Activated T-helper 2 cell treated with anti-CD3 and anti-CD28 coated beads, Interferon-gamma antibody, Interleukin-2, Interleukin-4, amounts not matched to agents 10 μg/mL and 5 μg/mL and 100 μg/mL, durations not matched to agents 14 hours and 24 hours and 36 hours (primary cell): ENCODE measurements at regions of chr6 and their contacts with region 1.

Region 1: DNA sequence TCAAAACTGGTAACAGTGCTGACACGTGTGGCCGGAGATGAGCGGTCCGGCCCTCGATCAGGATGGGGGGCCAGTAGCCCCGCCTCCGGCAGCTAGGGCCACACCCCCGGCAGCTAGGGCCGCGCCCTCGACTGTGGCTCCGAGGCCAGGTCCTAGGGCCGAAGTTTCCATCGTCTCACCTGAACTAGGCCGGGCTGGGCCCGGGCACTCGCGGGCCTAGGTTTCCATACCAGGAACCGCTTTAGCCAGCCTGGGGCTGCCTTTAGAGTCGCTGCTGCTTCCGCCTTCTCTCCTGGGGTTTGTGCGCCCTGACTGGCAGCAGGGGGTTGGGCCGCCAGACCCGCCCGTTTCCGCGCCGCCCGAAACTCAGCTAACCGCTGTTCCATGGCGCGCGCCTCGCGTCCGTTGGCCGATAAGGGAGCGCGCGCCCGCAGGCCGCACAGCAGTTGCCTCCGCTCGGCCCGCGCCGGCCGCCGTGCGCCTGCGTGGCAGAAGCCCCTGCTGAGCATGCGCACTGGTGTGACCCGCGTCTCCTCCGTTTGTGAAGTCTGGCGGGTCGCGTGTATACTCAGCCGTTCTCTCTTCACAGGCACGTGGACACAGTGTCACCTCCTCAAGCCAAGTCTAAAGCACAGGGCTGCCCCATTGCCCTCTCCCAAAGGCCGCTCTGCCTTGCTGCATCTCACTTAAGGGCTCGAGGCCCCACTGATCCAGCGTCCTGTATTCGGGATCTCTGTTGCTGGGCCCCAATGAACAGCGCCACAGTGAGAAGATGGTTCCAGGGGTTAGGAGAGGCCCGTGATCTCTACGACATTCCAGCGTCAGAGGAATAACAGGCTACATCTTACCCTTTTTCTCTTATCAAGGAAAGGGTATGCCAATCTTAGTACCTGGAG is at the start of gene SAYSD1:
- DNase-seq: peak; percentile 93
- H3K4me3 Mint-ChIP-seq: peak within 1 kb of the TSS; percentile 93
- H3K27ac Mint-ChIP-seq: peak within 1 kb of the TSS; percentile 99
- H3K4me1 Mint-ChIP-seq: peaks cover 57% of the 10 kb centered on the region
- H3K27me3 Mint-ChIP-seq: no peaks in the 10 kb centered on the region
- total RNA-seq, gene SAYSD1: 16.9 and 17.1 TPM in 2 replicates

Region 2: GRCh38 chr6:37516076-37516919 is 1598.7 kb before region 1 on chr6:
- intact Hi-C with region 1: loop called (anchors 10 kb)
- DNase-seq: peak; percentile 79
- H3K4me3 Mint-ChIP-seq: peak overlapping the region; percentile 69
- H3K27ac Mint-ChIP-seq: peak overlapping the region; percentile 86
- H3K4me1 Mint-ChIP-seq: peaks cover 52% of the 10 kb centered on the region
- H3K27me3 Mint-ChIP-seq: no peaks in the 10 kb centered on the region

Region 3: DNA sequence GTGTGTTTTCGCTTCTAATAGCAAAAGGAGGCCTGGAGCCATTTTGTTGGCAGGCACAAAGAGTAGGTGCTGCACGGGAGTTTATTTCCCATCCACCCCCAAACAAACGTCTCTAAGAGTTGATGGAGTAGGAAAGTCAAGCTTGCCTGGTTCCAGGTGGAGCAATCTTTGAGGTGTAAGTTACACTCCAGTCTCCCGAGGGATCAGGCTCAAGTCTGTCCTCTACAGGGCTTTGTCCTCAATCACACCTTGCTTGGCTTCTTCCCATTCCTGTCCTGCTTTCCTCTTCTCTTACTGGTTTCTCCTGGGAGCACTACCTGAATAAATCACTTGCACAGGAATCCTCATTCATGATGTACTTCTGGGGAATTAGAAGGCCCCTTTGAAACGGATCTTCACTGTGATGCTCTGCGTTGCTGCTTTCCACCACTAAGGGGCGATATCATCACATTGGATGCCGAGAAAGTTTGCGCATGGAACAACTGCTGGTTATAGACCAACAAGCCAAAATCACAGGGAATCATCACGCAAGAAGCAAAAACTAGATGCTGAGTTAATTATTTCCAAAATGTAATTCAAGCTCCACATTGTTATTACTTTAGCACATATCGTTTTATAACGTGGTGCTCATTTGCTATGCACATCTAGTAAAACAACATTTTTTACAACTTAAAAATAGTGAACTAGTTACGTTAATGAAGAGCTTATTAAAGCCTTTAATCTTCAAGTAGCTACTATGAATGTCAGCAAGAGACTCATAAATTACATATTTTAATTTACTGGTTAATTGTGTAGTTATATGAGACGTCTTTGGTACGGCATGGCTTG is 243.0 kb before region 1 on chr6:
- intact Hi-C with region 1: loop called (anchors 10 kb)
- DNase-seq: peak; percentile 34
- H3K4me3 Mint-ChIP-seq: no peak overlapping the region
- H3K27ac Mint-ChIP-seq: no peak overlapping the region
- H3K4me1 Mint-ChIP-seq: peaks cover 19% of the 10 kb centered on the region
- H3K27me3 Mint-ChIP-seq: peaks cover 18% of the 10 kb centered on the region

Region 4: DNA sequence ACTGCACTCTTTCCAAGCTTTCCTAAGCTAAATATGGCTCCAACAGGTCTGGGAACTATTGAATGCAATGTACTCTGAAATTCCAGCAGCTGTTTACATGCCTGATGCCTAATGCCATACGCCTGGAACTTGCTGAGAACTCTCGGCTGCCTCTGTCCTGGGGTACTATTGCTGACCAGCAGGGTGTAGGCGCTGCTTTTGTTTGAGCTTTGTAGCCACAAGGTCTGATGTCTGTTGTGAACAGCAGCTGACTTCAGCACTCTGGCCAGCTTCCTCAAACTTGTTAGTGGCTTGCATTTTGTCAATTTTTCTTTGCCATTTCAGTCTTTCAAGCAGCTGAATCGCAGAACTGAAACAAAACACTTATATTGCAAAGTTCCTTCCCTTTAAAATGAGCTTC is 26.6 kb before region 1 on chr6:
- intact Hi-C with region 1: loop called (anchors 1 kb)
- DNase-seq: no peak
- H3K4me3 Mint-ChIP-seq: no peak overlapping the region
- H3K27ac Mint-ChIP-seq: no peak overlapping the region
- H3K4me1 Mint-ChIP-seq: peaks cover 34% of the 10 kb centered on the region
- H3K27me3 Mint-ChIP-seq: peaks cover 54% of the 10 kb centered on the region

Region 5: GRCh38 chr6:39228992-39229767 is 114.2 kb after region 1 on chr6 and contains the start of gene KCNK5:
- intact Hi-C with region 1: loop called (anchors 1 kb)
- DNase-seq: peak; percentile 86
- H3K4me3 Mint-ChIP-seq: peak within 1 kb of the TSS; percentile 89
- H3K27ac Mint-ChIP-seq: peak within 1 kb of the TSS; percentile 72
- H3K4me1 Mint-ChIP-seq: peaks cover 32% of the 10 kb centered on the region
- H3K27me3 Mint-ChIP-seq: no peaks in the 10 kb centered on the region
- total RNA-seq, gene KCNK5: 41.5 and 42.6 TPM in 2 replicates